Gastrocnemius medialis (tissue), 4 donors: ENCODE measurements at regions of chr9 and their contacts with region 1.

Region 1: DNA sequence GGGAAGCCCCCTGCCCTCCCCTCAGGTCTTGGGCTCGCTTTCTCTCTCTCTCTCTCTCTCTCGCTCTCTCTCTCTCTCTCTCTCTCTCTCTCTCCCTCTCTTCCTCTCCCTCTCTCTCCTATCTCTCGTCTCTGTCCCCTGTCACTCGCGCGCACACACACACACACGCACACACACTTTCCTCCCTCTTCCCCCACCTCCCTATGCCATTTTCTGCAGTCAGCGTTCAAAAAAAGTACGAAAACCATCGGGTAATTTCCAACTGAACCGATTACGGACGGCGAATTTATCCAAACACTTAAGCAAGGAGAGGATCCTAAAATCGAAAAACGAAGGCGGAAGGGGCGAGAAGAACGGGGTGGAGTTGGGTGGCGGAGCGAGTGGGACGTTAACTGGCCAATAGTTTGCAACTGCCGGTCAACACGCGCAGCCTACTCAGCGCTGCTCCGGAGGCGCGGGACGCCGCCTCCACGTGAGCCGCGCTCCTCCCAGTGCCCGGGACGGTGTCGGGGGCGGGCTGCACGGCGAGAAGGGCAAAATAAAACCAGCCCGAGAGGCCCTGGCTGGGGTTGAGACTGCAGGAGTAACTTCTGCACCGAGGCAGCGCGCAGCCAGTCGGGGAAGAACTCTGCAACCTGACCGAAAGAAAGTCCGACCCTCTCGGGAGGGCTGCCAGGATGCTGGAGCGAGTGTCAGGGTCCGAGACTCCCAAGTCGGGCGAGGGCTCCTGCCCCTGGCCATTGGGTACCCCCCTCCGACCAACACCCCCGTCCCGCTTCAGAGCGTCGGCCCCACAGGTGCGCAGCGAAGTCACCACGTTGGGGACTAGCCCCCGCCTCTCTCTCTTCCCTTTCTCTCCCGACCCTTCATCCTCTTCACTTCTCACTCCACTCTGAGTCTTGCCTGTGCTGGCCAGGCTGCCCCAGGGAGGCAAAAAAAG is 24.9 kb upstream of the ELAVL2 start:
- DNase-seq: no peak
- ATAC-seq: no peak
- H3K4me3 ChIP-seq: peak overlapping the region; percentile 43 to 50 (median 48)
- H3K27ac ChIP-seq: no peak overlapping the region
- H3K4me1 ChIP-seq: no peaks in the 10 kb centered on the region
- H3K27me3 ChIP-seq: peaks cover 18 to 57% (median 32%) of the 10 kb centered on the region in 3 donors
- CTCF ChIP-seq: no peak
- POLR2A ChIP-seq: no peak

Region 2: GRCh38 chr9:23769307-23769935 is 81.5 kb before region 1 on chr9:
- in situ Hi-C with region 1: loop called in 1 of 4 experiments (anchors 25 kb)
- intact Hi-C with region 1: no loop called
- DNase-seq: no peak
- ATAC-seq: no peak
- H3K4me3 ChIP-seq: no peak overlapping the region
- H3K27ac ChIP-seq: no peak overlapping the region
- H3K4me1 ChIP-seq: no peaks in the 10 kb centered on the region
- H3K27me3 ChIP-seq: no peaks in the 10 kb centered on the region
- CTCF ChIP-seq: no peak
- POLR2A ChIP-seq: no peak

Region 3: DNA sequence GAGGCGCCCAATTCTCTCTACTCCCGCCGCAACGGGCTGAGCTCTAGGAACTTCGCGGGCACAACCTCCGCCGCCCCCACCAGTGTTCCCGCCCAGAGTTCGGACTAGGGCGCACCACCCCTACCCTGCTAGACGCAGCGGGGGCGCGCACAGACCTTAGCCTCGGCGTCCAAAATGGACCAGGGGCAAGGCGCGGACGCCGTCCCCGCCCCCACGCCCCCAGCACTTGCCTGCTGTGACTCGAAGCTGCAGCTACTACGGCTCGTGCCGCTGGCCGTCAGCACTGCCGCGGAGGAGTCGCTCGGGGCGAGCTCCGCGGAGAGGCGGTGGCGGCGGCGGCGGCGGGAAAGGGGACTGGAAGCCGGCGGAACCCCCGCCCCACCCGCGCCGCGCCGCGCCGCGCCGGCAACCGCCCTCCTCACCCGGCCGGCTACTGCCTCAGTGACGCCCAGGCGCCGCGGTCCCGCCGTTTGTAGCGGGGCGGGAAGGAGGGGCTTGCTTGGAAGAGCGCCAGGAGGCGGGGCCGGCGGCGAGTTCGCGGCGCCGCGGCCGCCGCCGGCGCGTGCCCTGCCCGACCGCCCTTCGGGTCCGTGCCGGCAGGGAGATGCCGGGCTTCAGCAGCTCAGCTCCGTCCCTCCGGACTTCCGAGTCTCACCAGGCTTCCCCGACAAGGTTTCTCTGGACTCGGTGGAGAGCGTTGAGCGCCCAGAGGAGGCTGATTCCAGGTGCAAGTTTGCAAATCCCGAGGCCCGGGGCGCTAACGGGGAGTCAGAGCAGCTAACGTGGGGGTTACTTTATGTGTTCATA is 29.4 kb before region 1 on chr9:
- in situ Hi-C with region 1: no loop called
- intact Hi-C with region 1: no loop called
- DNase-seq: no peak
- ATAC-seq: no peak
- H3K4me3 ChIP-seq: peak overlapping the region; percentile 32 to 50 (median 44)
- H3K27ac ChIP-seq: no peak overlapping the region
- H3K4me1 ChIP-seq: peaks cover 16 to 19% of the 10 kb centered on the region in 2 donors
- H3K27me3 ChIP-seq: peaks cover 64 to 94% (median 75%) of the 10 kb centered on the region in 3 donors
- CTCF ChIP-seq: no peak
- POLR2A ChIP-seq: no peak